Panc1 (cell line): ENCODE measurements at regions of chr7 and their contacts with region 1.

Region 1: DNA sequence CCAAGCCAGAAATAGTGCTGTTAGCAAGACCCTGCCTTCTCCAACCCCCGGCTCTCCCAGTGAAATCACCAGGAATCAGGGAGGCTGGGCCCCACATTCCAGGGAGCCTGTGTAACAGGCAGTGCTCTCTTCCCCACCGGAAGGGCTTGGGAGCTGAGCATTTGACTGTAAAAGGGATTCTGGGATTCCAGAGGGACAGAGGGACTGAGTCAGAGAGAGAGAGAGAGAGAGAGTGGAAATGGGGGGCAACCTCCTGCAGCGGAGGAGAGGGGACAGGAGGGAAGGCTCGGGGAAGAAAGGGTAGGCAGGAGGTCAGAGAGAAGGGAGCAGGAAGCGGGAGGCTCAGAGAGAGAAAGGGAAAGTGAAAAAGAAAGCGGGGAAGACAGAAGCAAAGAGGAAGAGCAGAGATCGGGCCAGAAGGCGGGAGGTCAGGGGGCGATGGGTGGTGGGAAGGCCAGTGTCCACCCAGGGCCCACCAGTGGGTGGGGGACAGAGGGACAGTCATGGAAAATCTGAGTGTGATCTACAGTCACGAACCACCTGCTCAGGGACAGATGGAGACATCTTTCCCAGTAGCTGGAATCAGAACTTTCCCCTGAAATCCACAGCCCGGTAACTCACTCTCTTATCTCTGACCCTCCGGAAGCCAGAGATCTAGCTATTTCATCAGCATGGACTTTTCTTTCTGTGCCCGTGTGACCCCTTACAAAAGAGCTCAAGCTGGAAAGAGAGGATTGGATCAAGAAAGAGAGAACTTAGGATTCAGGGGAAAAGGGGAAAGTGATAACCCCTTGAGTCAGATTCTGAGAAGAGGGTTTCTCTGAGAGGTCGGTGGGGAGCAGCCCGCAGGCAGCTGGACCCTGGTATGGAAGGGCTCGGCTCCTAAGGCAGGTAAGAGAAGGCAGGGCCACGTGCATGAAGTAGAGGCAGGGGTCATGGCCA is 4.6 kb upstream of the SERPINE1 start:
- DNase-seq: no peak
- ATAC-seq: peak; percentile 36
- H3K4me3 ChIP-seq: peak overlapping the region; percentile 19 to 23
- H3K27ac ChIP-seq: peak overlapping the region; percentile 98
- H3K4me1 ChIP-seq: peaks cover 81% of the 10 kb centered on the region
- H3K27me3 ChIP-seq: no peaks in the 10 kb centered on the region
- CTCF ChIP-seq: no peak

Region 2: GRCh38 chr7:101099969-101100781 is 22.1 kb before region 1 on chr7:
- CTCF ChIA-PET with region 1: no interaction called
- POLR2A ChIA-PET with region 1: interaction called, 15 read pairs
- in situ Hi-C with region 1: no loop called
- intact Hi-C with region 1: no loop called
- DNase-seq: peak; percentile 98
- ATAC-seq: peak; percentile 92
- H3K4me3 ChIP-seq: peak overlapping the region; percentile 16 to 43
- H3K27ac ChIP-seq: peak overlapping the region; percentile 97
- H3K4me1 ChIP-seq: peaks cover 63% of the 10 kb centered on the region
- H3K27me3 ChIP-seq: no peaks in the 10 kb centered on the region
- CTCF ChIP-seq: no peak